Cardiac septum (tissue), 1 donor: ENCODE measurements at regions of chr2 and their contacts with region 1.

Region 1: GRCh38 chr2:232839411-232840079 is 30.5 kb upstream of the SNORC start:
- DNase-seq: peak; percentile 82

Region 2: DNA sequence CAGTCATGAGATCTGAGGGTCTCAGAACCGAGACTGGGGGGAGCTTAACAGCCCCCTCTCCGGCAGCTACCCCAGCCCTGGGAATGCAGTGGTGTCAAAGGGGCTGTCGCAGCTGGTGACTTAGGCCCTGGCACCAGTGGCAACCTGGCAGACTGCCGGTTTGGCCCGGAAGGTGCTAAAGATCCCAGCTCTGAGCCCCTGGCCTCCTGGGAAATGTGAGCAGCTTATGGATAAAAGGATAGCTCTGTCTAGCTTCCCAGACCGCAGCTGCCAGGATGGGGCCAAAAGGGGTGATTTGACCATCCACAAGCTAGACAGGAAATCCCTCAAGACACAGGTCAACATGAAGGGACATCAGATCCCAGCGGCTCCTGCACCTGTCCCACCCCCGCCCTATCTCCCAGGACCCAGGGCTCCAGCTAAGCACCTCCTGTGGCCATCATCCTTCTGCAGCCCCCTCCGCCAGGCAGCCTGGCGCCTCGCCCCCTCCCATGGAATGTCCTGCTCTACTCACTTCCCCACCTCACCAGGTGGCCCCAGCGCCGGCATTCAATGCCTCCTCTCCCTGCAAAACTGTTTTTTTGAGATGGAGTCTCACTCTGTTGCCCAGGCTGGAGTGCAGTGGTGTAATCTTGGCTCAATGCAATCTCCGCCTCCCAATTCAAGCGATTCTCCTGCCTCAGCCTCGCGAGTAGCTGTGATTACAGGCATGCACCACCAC is 239.3 kb before region 1 on chr2:
- intact Hi-C with region 1: loop called (anchors 10 kb)
- DNase-seq: no peak